ENCODE measurements at regions of chr17 and their contacts with region 1.

Region 1: GRCh38 chr17:40287494-40288369 is at the start of gene CDC6:
- DNase-seq: peak; percentile 98 to 99
- ATAC-seq: peak; percentile 100
- H3K4me3 ChIP-seq: peak within 1 kb of the TSS; percentile 50 to 71 (median 64)
- H3K27ac ChIP-seq: peak within 1 kb of the TSS; percentile 22 to 61 (median 40)
- H3K4me1 ChIP-seq: peaks cover 13 to 17% of the 10 kb centered on the region in 2 donors
- H3K27me3 ChIP-seq: no peaks in the 10 kb centered on the region
- CTCF ChIP-seq: no peak
- POLR2A ChIP-seq: no peak
- total RNA-seq, gene CDC6: 0.27 to 0.75 (median 0.66) TPM in 3 of 4 donors, not detected in the other

Region 2: GRCh38 chr17:40203131-40203530 is 84.6 kb before region 1 on chr17:
- in situ Hi-C with region 1: loop called (anchors 5 to 10 kb)
- intact Hi-C with region 1: loop called (anchors 1 kb)
- DNase-seq: no peak
- ATAC-seq: no peak
- H3K4me3 ChIP-seq: no peak overlapping the region
- H3K27ac ChIP-seq: no peak overlapping the region
- H3K4me1 ChIP-seq: no peaks in the 10 kb centered on the region
- H3K27me3 ChIP-seq: no peaks in the 10 kb centered on the region
- CTCF ChIP-seq: no peak
- POLR2A ChIP-seq: no peak

Region 3: GRCh38 chr17:40209404-40210093 is 78.2 kb before region 1 on chr17:
- in situ Hi-C with region 1: loop called (anchors 5 to 10 kb)
- intact Hi-C with region 1: no loop called
- DNase-seq: no peak
- ATAC-seq: no peak
- H3K4me3 ChIP-seq: no peak overlapping the region
- H3K27ac ChIP-seq: no peak overlapping the region
- H3K4me1 ChIP-seq: no peaks in the 10 kb centered on the region
- H3K27me3 ChIP-seq: no peaks in the 10 kb centered on the region
- CTCF ChIP-seq: no peak
- POLR2A ChIP-seq: no peak

Region 4: DNA sequence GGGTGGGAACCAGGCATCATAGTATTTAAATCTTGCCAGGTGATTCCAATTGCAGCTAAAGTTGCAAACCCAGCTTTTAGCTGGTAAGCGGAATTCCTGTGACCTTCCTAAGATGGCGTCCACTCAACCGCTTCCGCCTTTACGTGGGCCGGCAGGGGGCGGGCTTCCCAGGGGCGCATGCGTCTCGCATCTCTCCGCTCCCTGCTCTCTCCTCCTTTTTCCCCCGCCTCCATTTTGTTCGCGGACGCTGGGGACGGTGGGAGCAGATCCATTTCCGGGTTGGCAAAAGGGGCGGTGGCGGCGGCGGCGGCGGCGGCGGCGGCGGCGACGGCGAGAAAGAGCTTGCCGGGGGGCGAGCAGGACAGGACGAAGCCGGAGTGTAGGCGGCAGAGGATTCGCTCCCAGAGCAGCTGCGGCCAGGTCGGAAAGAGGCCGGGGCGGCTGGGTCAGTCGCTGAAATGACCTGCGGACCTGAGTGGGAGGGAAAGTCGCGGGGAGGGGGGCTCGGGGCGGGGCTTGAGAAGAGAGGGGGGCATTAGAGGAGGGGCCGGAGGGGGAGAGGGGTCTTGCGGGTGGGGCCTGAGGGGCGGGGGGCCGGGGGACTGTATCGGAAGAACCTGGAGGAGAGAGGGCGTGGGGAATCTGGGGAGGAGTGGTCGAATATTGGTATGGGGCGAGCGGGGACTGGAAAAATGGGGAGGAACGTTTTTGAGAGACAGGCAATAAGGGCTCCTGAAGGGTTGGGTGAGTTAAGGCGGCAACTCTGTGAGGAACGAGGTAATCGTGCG is 68.5 kb before region 1 on chr17 and contains the start of gene WIPF2:
- in situ Hi-C with region 1: no loop called
- intact Hi-C with region 1: loop called (anchors 5 kb)
- DNase-seq: peak; percentile 94 to 95
- ATAC-seq: peak; percentile 99
- H3K4me3 ChIP-seq: peak within 1 kb of the TSS; percentile 75 to 94 (median 86)
- H3K27ac ChIP-seq: peak within 1 kb of the TSS; percentile 85 to 98 (median 95)
- H3K4me1 ChIP-seq: peaks cover 0 to 12% of the 10 kb centered on the region in 2 donors
- H3K27me3 ChIP-seq: no peaks in the 10 kb centered on the region
- CTCF ChIP-seq: peak; percentile 50 to 90 (median 87)
- POLR2A ChIP-seq: peak; percentile 72 to 74
- total RNA-seq, gene WIPF2: 4.6 to 6.2 (median 5.4) TPM

Region 5: GRCh38 chr17:40317880-40318829 is 30.4 kb after region 1 on chr17:
- in situ Hi-C with region 1: no loop called
- intact Hi-C with region 1: no loop called
- DNase-seq: peak; percentile 97 to 98
- ATAC-seq: peak; percentile 43 to 66
- H3K4me3 ChIP-seq: peak overlapping the region; percentile 82 to 100 (median 90)
- H3K27ac ChIP-seq: peak overlapping the region; percentile 95 to 100 (median 98)
- H3K4me1 ChIP-seq: peaks cover 76 to 89% of the 10 kb centered on the region in 2 donors
- H3K27me3 ChIP-seq: no peaks in the 10 kb centered on the region
- CTCF ChIP-seq: no peak
- POLR2A ChIP-seq: peak; percentile 98

Region 6: GRCh38 chr17:40417609-40418427 is 130.1 kb after region 1 on chr17 and contains the start of gene TOP2A:
- in situ Hi-C with region 1: no loop called
- intact Hi-C with region 1: loop called (anchors 5 kb)
- DNase-seq: peak; percentile 98 to 99
- ATAC-seq: peak; percentile 100
- H3K4me3 ChIP-seq: peak within 1 kb of the TSS; percentile 57 to 87 (median 62)
- H3K27ac ChIP-seq: peak within 1 kb of the TSS; percentile 37 to 58 (median 46)
- H3K4me1 ChIP-seq: peaks cover 6 to 10% of the 10 kb centered on the region in 2 donors
- H3K27me3 ChIP-seq: peaks cover 0 to 10% (median 5%) of the 10 kb centered on the region in 3 donors
- CTCF ChIP-seq: no peak
- POLR2A ChIP-seq: no peak
- total RNA-seq, gene TOP2A: 0.26 to 1.6 (median 1.0) TPM

Region 7: GRCh38 chr17:40559954-40560591 is 272.3 kb after region 1 on chr17:
- in situ Hi-C with region 1: no loop called
- intact Hi-C with region 1: loop called (anchors 10 kb)
- DNase-seq: peak; percentile 61 to 81
- ATAC-seq: peak; percentile 89 to 92
- H3K4me3 ChIP-seq: no peak overlapping the region
- H3K27ac ChIP-seq: peak overlapping the region; percentile 41 to 73 (median 65)
- H3K4me1 ChIP-seq: peaks cover 6 to 7% of the 10 kb centered on the region in 2 donors
- H3K27me3 ChIP-seq: no peaks in the 10 kb centered on the region
- CTCF ChIP-seq: peak; percentile 95 to 98 (median 96)
- POLR2A ChIP-seq: no peak

Region 8: GRCh38 chr17:40647624-40648383 is 360.1 kb after region 1 on chr17 and contains the start of gene SMARCE1:
- in situ Hi-C with region 1: no loop called
- intact Hi-C with region 1: loop called (anchors 10 kb)
- DNase-seq: peak; percentile 19 to 41
- ATAC-seq: peak; percentile 78 to 84
- H3K4me3 ChIP-seq: peak within 1 kb of the TSS; percentile 75 to 98 (median 82)
- H3K27ac ChIP-seq: peak within 1 kb of the TSS; percentile 95 to 99 (median 97)
- H3K4me1 ChIP-seq: peaks cover 28 to 35% of the 10 kb centered on the region in 2 donors
- H3K27me3 ChIP-seq: no peaks in the 10 kb centered on the region
- CTCF ChIP-seq: no peak
- POLR2A ChIP-seq: peak; percentile 24 to 44
- total RNA-seq, gene SMARCE1: 48.0 to 74.7 (median 64.5) TPM

Measured in gastrocnemius medialis (tissue), 4 donors.